Heart right ventricle (tissue), 16 donors: ENCODE measurements at regions of chr19 and their contacts with region 1.

Region 1: DNA sequence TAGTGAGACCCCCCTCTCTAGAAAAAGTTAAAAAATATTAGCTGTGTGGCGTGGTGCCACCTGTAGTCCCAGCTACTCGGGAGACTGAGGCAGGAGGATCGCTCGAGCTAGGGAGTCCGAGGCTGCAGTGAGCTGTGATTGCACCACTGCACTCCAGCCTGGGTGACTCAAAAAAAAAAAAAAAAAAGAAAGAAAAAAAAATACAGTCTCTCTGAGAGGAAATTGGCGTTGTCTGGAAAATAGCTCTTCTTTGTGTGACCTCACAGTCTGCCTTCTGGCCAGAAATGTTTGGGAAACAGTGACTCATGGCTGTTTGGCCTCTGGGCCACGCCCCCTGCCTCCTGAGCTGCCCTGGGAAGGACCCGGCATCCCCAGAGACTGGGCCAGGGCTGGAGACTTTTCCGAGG is 10.7 kb downstream of the MARCHF2 start:
- DNase-seq: peak; percentile 91 to 96
- ATAC-seq: peak; percentile 94 to 99 (median 98)
- H3K4me3 ChIP-seq: peak overlapping the region in 7 of 10 donors; percentile 9 to 30 (median 22)
- H3K27ac ChIP-seq: peak overlapping the region; percentile 81 to 97 (median 89)
- H3K4me1 ChIP-seq: peaks cover 11 to 30% (median 20%) of the 10 kb centered on the region in 9 donors
- H3K27me3 ChIP-seq: no peaks in the 10 kb centered on the region
- CTCF ChIP-seq: no peak

Region 2: DNA sequence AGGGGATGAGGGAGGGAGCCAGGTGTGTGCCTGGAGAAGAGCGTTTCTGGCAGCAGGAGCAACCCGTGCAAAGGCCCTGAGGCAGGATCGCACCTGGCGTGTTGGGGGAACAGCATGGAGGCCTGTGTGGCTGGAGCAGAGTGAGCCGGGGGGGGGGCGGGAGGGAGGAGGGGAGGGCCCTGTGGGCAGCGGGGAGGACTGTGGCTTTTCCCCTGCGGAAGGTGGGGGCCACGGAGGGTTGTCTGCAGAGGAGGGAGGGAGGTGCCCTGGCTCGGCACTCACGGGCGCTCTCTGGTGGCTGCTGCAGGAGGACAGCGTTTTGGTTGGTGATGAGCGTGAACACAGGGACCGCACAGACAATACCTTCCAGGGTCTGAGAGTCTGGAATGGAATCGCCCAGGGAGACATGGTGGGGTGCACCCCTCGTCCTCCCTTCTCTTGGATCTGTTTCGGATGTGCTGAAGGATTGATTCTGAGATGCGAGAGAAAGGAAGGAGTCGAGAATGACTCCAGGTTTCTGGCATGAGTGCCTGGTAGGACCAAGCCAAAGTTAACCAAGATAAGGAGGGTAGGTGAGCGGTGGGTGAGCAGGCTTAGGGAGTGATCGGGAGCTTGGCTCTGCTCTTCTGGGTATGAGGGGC is 27.1 kb before region 1 on chr19:
- intact Hi-C with region 1: loop called in 1 of 10 experiments (anchors 1 kb)
- DNase-seq: peak; percentile 55 to 79
- ATAC-seq: peak; percentile 5 to 59 (median 36)
- H3K4me3 ChIP-seq: no peak overlapping the region
- H3K27ac ChIP-seq: peak overlapping the region in 4 of 10 donors; percentile 15 to 100 (median 50)
- H3K4me1 ChIP-seq: peaks cover 34 to 71% (median 63%) of the 10 kb centered on the region in 9 donors
- H3K27me3 ChIP-seq: no peaks in the 10 kb centered on the region
- CTCF ChIP-seq: peak; percentile 45 to 78 (median 66)

Region 3: GRCh38 chr19:8451885-8452284 is 28.1 kb after region 1 on chr19:
- intact Hi-C with region 1: no loop called
- DNase-seq: no peak
- ATAC-seq: no peak
- H3K4me3 ChIP-seq: no peak overlapping the region
- H3K27ac ChIP-seq: peak overlapping the region in 1 of 10 donors; percentile 14
- H3K4me1 ChIP-seq: peaks cover 30 to 98% (median 85%) of the 10 kb centered on the region in 9 donors
- H3K27me3 ChIP-seq: no peaks in the 10 kb centered on the region
- CTCF ChIP-seq: no peak

Region 4: DNA sequence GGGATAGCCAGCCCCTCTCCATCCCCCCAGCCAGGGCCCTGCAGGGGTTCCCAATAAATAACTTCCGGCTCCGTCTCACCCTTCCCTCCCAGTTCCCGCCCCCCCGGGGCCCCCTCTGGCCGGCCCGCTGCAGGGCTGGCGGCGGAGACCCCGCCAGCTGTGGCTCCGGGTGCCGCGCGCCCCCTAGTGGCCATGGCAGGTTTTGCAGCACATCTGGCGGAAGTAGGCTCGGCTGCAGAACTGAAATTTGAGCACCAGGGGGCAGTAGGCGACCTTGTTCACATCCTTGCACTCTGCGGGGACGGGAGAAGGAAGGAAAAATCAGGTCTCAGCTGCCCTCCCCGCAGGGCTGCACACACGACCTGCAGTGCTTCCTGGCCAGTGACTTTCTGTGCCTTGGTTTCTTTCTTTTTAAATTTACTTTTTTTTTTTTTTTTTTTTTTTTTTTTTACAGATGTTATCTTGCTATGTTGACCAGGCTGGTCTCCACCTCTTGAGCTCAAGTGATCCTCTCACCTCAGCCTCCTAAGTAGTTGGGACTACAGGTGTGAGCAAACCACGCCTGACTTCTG is 157.0 kb after region 1 on chr19:
- intact Hi-C with region 1: no loop called
- DNase-seq: peak; percentile 80 to 82
- ATAC-seq: peak; percentile 60 to 77 (median 66)
- H3K4me3 ChIP-seq: no peak overlapping the region
- H3K27ac ChIP-seq: no peak overlapping the region
- H3K4me1 ChIP-seq: peaks cover 0 to 38% (median 10%) of the 10 kb centered on the region in 9 donors
- H3K27me3 ChIP-seq: peaks cover 0 to 27% (median 13%) of the 10 kb centered on the region in 7 donors
- CTCF ChIP-seq: peak; percentile 99 to 100 (median 99)